Keratinocyte (primary cell): ENCODE measurements at regions of chr14 and their contacts with region 1.

Region 1: GRCh38 chr14:104826189-104826860 is 25.4 kb downstream of the ZBTB42 start:
- DNase-seq: peak; percentile 33
- H3K4me3 ChIP-seq: peak overlapping the region; percentile 48 to 80 (median 76)
- H3K27ac ChIP-seq: no peak overlapping the region
- H3K4me1 ChIP-seq: peaks cover 13% of the 10 kb centered on the region
- H3K27me3 ChIP-seq: no peaks in the 10 kb centered on the region
- CTCF ChIP-seq: peak in 2 of 3 experiments; percentile 56 to 85

Region 2: GRCh38 chr14:104752735-104753531 is 73.4 kb before region 1 on chr14 and contains the start of gene SIVA1:
- dilution Hi-C with region 1: loop called (anchors 10 kb)
- DNase-seq: peak; percentile 97
- H3K4me3 ChIP-seq: peak within 1 kb of the TSS; percentile 79 to 97 (median 86)
- H3K27ac ChIP-seq: peak within 1 kb of the TSS; percentile 84
- H3K4me1 ChIP-seq: peaks cover 40% of the 10 kb centered on the region
- H3K27me3 ChIP-seq: no peaks in the 10 kb centered on the region
- CTCF ChIP-seq: no peak
- polyA plus RNA-seq, gene SIVA1: 33.5 to 63.3 TPM (median 35.3 TPM) in 3 replicates